ENCODE measurements at regions of chr15 and their contacts with region 1.

Region 1: GRCh38 chr15:63833021-63833696 is 589 bp downstream of the HERC1 start:
- DNase-seq: peak; percentile 11 to 55 (median 38)
- ATAC-seq: peak; percentile 48
- H3K4me3 ChIP-seq: peak overlapping the region; percentile 68
- H3K4me3 Mint-ChIP-seq: peak overlapping the region; percentile 86 to 98 (median 94)
- H3K27ac ChIP-seq: peak overlapping the region; percentile 99
- H3K27ac Mint-ChIP-seq: peak overlapping the region; percentile 94 to 99 (median 97)
- H3K4me1 ChIP-seq: peaks cover 30 to 31% of the 10 kb centered on the region in 2 donors
- H3K4me1 Mint-ChIP-seq: peaks cover 46 to 66% (median 56%) of the 10 kb centered on the region in 7 donors
- H3K27me3 ChIP-seq: no peaks in the 10 kb centered on the region
- H3K27me3 Mint-ChIP-seq: peaks cover 0 to 9% (median 0%) of the 10 kb centered on the region in 5 donors

Region 2: GRCh38 chr15:63582718-63583426 is 250.3 kb before region 1 on chr15:
- CTCF ChIA-PET with region 1: no interaction called
- POLR2A ChIA-PET with region 1: no interaction called
- intact Hi-C with region 1: no loop called
- DNase-seq: no peak
- ATAC-seq: peak; percentile 10
- H3K4me3 ChIP-seq: no peak overlapping the region
- H3K4me3 Mint-ChIP-seq: no peak overlapping the region
- H3K27ac ChIP-seq: no peak overlapping the region
- H3K27ac Mint-ChIP-seq: peak overlapping the region in 8 of 9 donors; percentile 8 to 91 (median 64)
- H3K4me1 ChIP-seq: no peaks in the 10 kb centered on the region
- H3K4me1 Mint-ChIP-seq: peaks cover 8 to 34% (median 19%) of the 10 kb centered on the region in 7 donors
- H3K27me3 ChIP-seq: no peaks in the 10 kb centered on the region
- H3K27me3 Mint-ChIP-seq: no peaks in the 10 kb centered on the region

Region 3: DNA sequence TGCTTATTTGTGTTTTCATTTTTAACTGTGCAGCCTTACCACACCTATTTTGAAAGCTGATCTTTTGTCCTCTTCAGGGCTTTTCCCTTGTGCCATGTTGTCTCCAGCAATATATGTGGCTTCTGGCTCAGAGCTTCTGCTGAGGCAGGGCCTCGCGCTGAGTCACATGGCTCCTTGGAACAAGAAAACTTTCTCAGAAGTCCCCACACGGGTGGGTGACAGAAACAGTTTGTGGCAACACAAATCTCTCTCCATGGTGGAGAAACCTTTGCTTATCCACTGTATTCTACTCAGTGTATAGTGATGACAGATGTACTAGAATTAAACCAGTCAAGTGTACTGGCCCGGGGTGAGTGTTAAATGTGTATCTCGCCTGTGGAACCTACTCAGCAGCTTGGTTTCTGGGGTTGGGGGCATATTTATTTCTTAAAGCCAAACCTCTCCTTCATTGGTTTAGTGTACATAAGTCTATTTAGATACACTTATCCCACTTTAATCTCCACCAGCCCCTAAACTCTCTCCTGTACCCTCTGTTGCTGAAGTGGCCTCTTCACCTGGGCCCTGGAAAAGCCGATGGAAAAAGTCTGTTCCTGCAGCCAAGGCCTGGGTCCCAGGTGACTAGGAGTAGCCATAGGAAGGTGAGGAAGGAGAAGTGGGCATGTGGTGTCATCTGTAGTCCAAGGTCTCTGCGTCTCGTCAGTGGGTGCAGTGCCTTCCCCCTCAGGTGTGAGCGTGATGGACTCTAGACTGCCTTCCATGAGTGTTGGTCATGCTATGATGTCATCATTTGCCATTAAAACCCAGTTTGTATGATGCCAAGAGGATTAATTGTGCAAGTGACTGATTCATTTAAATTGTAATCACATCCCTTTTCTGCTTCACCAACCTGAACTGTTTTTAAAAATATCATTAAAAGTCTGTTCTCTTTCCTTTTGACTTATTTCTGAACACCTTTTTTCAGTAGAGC is 239.2 kb before region 1 on chr15:
- CTCF ChIA-PET with region 1: no interaction called
- POLR2A ChIA-PET with region 1: no interaction called
- intact Hi-C with region 1: no loop called
- DNase-seq: no peak
- ATAC-seq: peak; percentile 10
- H3K4me3 ChIP-seq: no peak overlapping the region
- H3K4me3 Mint-ChIP-seq: peak overlapping the region in 4 of 10 donors; percentile 3 to 25 (median 6)
- H3K27ac ChIP-seq: no peak overlapping the region
- H3K27ac Mint-ChIP-seq: peak overlapping the region; percentile 43 to 91 (median 78)
- H3K4me1 ChIP-seq: peaks cover 0 to 10% of the 10 kb centered on the region in 2 donors
- H3K4me1 Mint-ChIP-seq: peaks cover 30 to 79% (median 71%) of the 10 kb centered on the region in 7 donors
- H3K27me3 ChIP-seq: no peaks in the 10 kb centered on the region
- H3K27me3 Mint-ChIP-seq: no peaks in the 10 kb centered on the region

Region 4: DNA sequence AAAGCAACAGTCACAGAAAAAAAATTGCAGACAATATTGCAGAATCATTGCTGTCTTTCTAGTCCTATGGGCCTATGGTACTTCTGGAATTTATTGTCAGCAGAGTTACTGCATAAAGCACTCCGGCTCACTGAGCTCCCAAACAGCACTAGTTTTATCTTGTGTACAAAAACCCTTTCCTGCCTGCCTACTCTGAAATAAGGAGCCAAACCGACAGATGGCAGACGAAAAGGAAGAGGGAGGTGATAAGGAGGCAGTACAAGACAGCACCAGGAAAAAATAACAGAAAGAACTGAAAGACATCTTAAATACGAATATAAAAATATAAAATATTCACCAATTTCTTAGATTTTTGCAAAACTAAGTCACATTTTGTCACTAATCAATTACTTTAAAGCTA is 15.0 kb before region 1 on chr15:
- CTCF ChIA-PET with region 1: no interaction called
- POLR2A ChIA-PET with region 1: interaction called, 6 read pairs
- intact Hi-C with region 1: loop called in 1 of 2 experiments (anchors 1 kb)
- DNase-seq: peak in 4 of 9 donors; percentile 18 to 40 (median 38)
- ATAC-seq: peak; percentile 44
- H3K4me3 ChIP-seq: no peak overlapping the region
- H3K4me3 Mint-ChIP-seq: peak overlapping the region in 9 of 10 donors; percentile 50 to 82 (median 65)
- H3K27ac ChIP-seq: peak overlapping the region; percentile 12
- H3K27ac Mint-ChIP-seq: peak overlapping the region in 4 of 9 donors; percentile 41 to 83 (median 78)
- H3K4me1 ChIP-seq: peaks cover 9 to 44% of the 10 kb centered on the region in 2 donors
- H3K4me1 Mint-ChIP-seq: peaks cover 54 to 91% (median 81%) of the 10 kb centered on the region in 7 donors
- H3K27me3 ChIP-seq: no peaks in the 10 kb centered on the region
- H3K27me3 Mint-ChIP-seq: no peaks in the 10 kb centered on the region

Region 5: GRCh38 chr15:63860155-63860554 is 27.0 kb after region 1 on chr15:
- CTCF ChIA-PET with region 1: interaction called, 5 read pairs
- POLR2A ChIA-PET with region 1: interaction called, 12 read pairs
- intact Hi-C with region 1: loop called in 1 of 2 experiments (anchors 1 kb)
- DNase-seq: peak; percentile 27 to 90 (median 83)
- ATAC-seq: peak; percentile 95
- H3K4me3 ChIP-seq: no peak overlapping the region
- H3K4me3 Mint-ChIP-seq: peak overlapping the region; percentile 54 to 85 (median 76)
- H3K27ac ChIP-seq: peak overlapping the region; percentile 76
- H3K27ac Mint-ChIP-seq: peak overlapping the region; percentile 87 to 99 (median 97)
- H3K4me1 ChIP-seq: peaks cover 7 to 42% of the 10 kb centered on the region in 2 donors
- H3K4me1 Mint-ChIP-seq: peaks cover 29 to 78% (median 73%) of the 10 kb centered on the region in 7 donors
- H3K27me3 ChIP-seq: no peaks in the 10 kb centered on the region
- H3K27me3 Mint-ChIP-seq: no peaks in the 10 kb centered on the region

Region 6: DNA sequence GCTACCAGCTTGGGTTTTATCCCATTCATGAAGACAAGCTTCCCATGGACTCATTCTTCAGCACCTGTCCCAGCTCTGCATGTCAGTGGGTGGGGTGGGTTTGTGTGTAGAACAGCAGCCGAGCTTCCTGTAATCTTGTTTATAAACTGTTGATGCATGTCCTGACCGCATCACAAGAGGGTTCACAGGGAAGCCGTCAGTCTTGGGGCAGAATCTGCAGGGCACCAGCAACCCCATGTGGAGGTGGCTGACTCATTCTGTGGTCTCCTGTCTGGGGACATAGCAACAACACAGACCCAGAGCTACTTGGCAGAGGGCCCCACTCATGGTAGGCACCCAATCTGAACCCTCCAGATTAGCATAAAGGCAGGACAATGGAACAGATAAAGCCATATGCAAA is 177.6 kb after region 1 on chr15:
- CTCF ChIA-PET with region 1: no interaction called
- POLR2A ChIA-PET with region 1: interaction called, 3 read pairs
- intact Hi-C with region 1: loop called (anchors 1 kb)
- DNase-seq: peak; percentile 43 to 92 (median 85)
- ATAC-seq: peak; percentile 98
- H3K4me3 ChIP-seq: no peak overlapping the region
- H3K4me3 Mint-ChIP-seq: peak overlapping the region; percentile 32 to 87 (median 62)
- H3K27ac ChIP-seq: peak overlapping the region; percentile 32
- H3K27ac Mint-ChIP-seq: peak overlapping the region; percentile 87 to 98 (median 95)
- H3K4me1 ChIP-seq: peaks cover 24 to 27% of the 10 kb centered on the region in 2 donors
- H3K4me1 Mint-ChIP-seq: peaks cover 20 to 64% (median 30%) of the 10 kb centered on the region in 7 donors
- H3K27me3 ChIP-seq: no peaks in the 10 kb centered on the region
- H3K27me3 Mint-ChIP-seq: peaks cover 0 to 3% (median 0%) of the 10 kb centered on the region in 5 donors

Region 7: GRCh38 chr15:64153480-64154367 is 320.6 kb after region 1 on chr15:
- CTCF ChIA-PET with region 1: no interaction called
- POLR2A ChIA-PET with region 1: no interaction called
- intact Hi-C with region 1: loop called (anchors 5 kb)
- DNase-seq: peak; percentile 77 to 96 (median 88)
- ATAC-seq: peak; percentile 97
- H3K4me3 ChIP-seq: peak overlapping the region; percentile 34
- H3K4me3 Mint-ChIP-seq: peak overlapping the region; percentile 60 to 85 (median 79)
- H3K27ac ChIP-seq: peak overlapping the region; percentile 25
- H3K27ac Mint-ChIP-seq: peak overlapping the region in 6 of 9 donors; percentile 14 to 74 (median 31)
- H3K4me1 ChIP-seq: peaks cover 10 to 21% of the 10 kb centered on the region in 2 donors
- H3K4me1 Mint-ChIP-seq: peaks cover 30 to 48% (median 39%) of the 10 kb centered on the region in 7 donors
- H3K27me3 ChIP-seq: peaks cover 0 to 4% of the 10 kb centered on the region in 2 donors
- H3K27me3 Mint-ChIP-seq: peaks cover 0 to 16% (median 8%) of the 10 kb centered on the region in 5 donors